Activated CD4-positive, alpha-beta T cell treated with anti-CD3 and anti-CD28 coated beads for 36 hours (primary cell): ENCODE measurements at regions of chr6 and their contacts with region 1.

Region 1: GRCh38 chr6:87832025-87832825 is 130.2 kb upstream of the AKIRIN2 start:
- DNase-seq: no peak
- ATAC-seq: peak; percentile 81
- H3K4me3 Mint-ChIP-seq: peak overlapping the region; percentile 62
- H3K27ac Mint-ChIP-seq: peak overlapping the region; percentile 61
- H3K4me1 Mint-ChIP-seq: peaks cover 9% of the 10 kb centered on the region
- H3K27me3 Mint-ChIP-seq: peaks cover 6% of the 10 kb centered on the region

Region 2: DNA sequence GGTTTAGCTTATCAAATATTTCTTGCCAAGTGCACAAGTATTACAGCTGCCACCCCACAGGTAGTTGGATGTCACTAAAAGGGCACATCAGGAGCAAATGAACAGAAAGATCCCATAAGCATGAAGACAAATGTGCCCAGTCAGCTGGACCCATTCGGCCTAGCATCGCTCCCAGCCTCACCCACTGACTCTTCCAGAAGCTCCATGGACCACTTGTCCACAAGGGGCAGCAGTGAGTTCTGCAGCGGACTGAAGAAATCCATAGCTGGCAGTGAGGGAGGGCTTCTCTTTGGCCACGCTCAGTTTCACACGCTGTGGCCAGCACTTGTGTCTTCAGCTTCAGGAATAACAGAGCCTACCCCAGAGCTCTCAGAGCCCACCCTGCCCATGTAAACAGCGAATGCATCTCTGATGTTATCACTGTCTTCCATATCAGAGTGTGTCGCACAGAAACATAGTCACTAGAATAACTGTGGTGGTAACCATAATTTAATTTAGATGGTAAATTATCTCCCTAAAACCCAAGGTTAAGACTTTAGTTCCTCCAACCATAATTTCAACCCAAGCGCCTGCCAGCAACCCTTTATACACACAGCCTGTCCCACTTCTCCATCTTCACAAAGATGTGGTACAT is 753.1 kb before region 1 on chr6:
- CTCF ChIA-PET with region 1: no interaction called
- POLR2A ChIA-PET with region 1: no interaction called
- intact Hi-C with region 1: no loop called
- DNase-seq: peak; percentile 76
- ATAC-seq: peak; percentile 84
- H3K4me3 Mint-ChIP-seq: no peak overlapping the region
- H3K27ac Mint-ChIP-seq: no peak overlapping the region
- H3K4me1 Mint-ChIP-seq: no peaks in the 10 kb centered on the region
- H3K27me3 Mint-ChIP-seq: peaks cover 18% of the 10 kb centered on the region

Region 3: DNA sequence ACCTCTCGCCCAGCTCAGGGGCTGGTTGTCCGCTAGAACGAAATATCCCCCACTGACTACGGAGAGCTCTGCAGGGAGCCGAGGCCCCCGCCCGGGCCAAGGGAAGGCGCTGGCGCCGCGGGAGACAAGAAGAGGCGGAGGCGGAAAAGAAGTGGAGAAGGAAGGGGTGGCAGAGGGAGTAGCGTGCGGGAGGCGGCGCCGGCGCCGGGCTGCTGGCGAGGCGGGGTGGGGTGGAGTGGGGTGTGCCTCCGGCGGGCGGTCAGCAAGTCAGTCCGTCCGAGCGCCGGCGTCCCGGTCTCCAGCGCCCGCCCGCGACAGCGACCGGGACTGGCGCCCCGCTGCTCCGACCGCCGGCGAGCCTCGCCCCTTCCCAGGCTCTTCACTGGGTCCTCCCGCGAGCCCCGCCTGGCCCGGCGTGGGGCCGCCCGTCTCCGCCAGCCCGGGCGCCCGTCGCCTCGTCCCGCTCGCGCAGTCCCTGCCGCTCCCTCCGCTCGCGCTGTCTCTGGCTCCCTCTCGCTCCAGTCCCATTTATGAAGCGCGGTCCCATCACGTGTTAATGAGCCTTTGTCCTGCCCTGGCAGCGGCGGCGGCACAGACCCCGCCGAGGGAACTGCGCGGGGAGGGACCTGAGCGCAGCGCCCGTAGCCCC is 333.7 kb after region 1 on chr6 and contains the start of gene CNR1:
- CTCF ChIA-PET with region 1: no interaction called
- POLR2A ChIA-PET with region 1: no interaction called
- intact Hi-C with region 1: loop called in 1 of 2 experiments (anchors 10 kb)
- DNase-seq: peak; percentile 36
- ATAC-seq: peak; percentile 68
- H3K4me3 Mint-ChIP-seq: peak within 1 kb of the TSS; percentile 56
- H3K27ac Mint-ChIP-seq: no peak within 1 kb of the TSS
- H3K4me1 Mint-ChIP-seq: peaks cover 11% of the 10 kb centered on the region
- H3K27me3 Mint-ChIP-seq: peaks cover 56% of the 10 kb centered on the region
- total RNA-seq, gene CNR1: not detected

Region 4: DNA sequence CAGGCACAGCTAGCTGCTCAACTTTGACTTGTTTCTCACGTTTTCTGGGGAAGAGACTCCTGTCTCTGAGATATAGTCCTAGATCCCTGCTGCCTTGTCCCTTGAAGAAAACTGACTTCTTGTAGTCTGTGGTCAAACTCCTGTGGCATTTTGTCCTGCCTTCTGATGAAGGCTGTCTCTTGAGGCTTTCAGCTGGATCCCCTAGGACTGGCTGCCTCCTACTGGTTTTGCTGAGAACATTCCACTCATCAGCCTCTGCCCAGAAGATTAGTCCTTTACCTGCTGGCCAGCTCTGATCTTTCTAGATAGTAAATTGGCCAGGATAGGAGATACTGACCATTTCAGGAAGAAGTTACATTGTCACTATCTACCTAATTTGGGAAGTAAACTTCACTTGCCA is 405.8 kb after region 1 on chr6:
- CTCF ChIA-PET with region 1: no interaction called
- POLR2A ChIA-PET with region 1: no interaction called
- intact Hi-C with region 1: loop called in 1 of 2 experiments (anchors 5 kb)
- DNase-seq: peak; percentile 17
- ATAC-seq: no peak
- H3K4me3 Mint-ChIP-seq: no peak overlapping the region
- H3K27ac Mint-ChIP-seq: no peak overlapping the region
- H3K4me1 Mint-ChIP-seq: no peaks in the 10 kb centered on the region
- H3K27me3 Mint-ChIP-seq: peaks cover 2% of the 10 kb centered on the region

Region 5: GRCh38 chr6:88870717-88871330 is 1038.6 kb after region 1 on chr6:
- CTCF ChIA-PET with region 1: no interaction called
- POLR2A ChIA-PET with region 1: no interaction called
- intact Hi-C with region 1: loop called in 1 of 2 experiments (anchors 5 kb)
- DNase-seq: peak; percentile 44
- ATAC-seq: no peak
- H3K4me3 Mint-ChIP-seq: no peak overlapping the region
- H3K27ac Mint-ChIP-seq: no peak overlapping the region
- H3K4me1 Mint-ChIP-seq: peaks cover 28% of the 10 kb centered on the region
- H3K27me3 Mint-ChIP-seq: no peaks in the 10 kb centered on the region